PC-9 (cell line): ENCODE measurements at regions of chr11 and their contacts with region 1.

Region 1: DNA sequence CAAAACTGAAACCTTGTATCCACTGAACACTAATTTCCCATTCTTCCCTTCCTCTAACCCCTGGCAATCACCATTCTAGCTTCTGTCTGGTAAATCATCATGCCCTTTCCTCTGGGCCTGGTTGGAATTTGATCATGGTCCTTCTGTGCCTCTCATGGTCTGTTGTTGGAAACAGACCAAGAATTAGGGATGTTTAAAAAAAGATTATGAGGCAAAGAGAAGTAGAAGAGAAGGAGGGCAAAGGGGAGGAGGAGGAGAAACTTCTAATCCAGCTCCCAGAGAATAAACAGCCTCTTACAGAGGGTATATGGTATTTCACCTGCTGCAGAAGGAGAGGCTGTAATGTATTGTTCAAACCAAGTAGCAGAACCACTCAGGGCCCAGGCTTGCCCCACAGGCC is 10.6 kb downstream of the BCO2 start:
- DNase-seq: peak in 1 of 2 experiments; percentile 26
- H3K4me3 ChIP-seq: no peak overlapping the region
- H3K27ac ChIP-seq: no peak overlapping the region
- H3K4me1 ChIP-seq: peaks cover 6% of the 10 kb centered on the region; the same call in 1 of the 2 replicates
- H3K27me3 ChIP-seq: no peaks in the 10 kb centered on the region
- CTCF ChIP-seq: no peak

Region 2: GRCh38 chr11:112129656-112130055 is 56.2 kb before region 1 on chr11:
- CTCF ChIA-PET with region 1: no interaction called
- POLR2A ChIA-PET with region 1: no interaction called
- intact Hi-C with region 1: no loop called
- DNase-seq: no peak
- H3K4me3 ChIP-seq: no peak overlapping the region
- H3K27ac ChIP-seq: no peak overlapping the region
- H3K4me1 ChIP-seq: peaks cover 24% of the 10 kb centered on the region
- H3K27me3 ChIP-seq: no peaks in the 10 kb centered on the region
- CTCF ChIP-seq: no peak

Region 3: DNA sequence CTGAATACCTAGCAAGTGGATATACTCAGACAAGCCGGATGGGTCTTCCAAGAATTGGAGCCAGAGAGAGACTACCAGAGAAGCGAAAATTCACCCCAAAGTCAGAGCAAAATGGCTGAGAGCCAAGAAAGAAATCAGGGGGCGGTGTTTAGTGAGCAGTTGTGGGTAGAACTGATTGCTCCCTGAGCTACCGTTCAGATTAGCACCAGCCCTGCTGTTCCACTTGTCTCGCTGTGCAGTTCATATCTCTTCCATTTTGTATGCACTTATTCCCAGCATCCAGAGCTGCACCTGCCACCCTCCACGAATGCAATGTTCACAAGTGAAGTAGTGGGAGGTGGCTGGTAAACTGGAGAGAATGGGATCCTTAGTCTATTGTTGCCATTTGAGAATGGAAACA is 1263.9 kb after region 1 on chr11:
- CTCF ChIA-PET with region 1: no interaction called
- POLR2A ChIA-PET with region 1: interaction called, 20 read pairs
- intact Hi-C with region 1: no loop called
- DNase-seq: no peak
- H3K4me3 ChIP-seq: no peak overlapping the region
- H3K27ac ChIP-seq: no peak overlapping the region
- H3K4me1 ChIP-seq: no peaks in the 10 kb centered on the region
- H3K27me3 ChIP-seq: peaks cover 87% of the 10 kb centered on the region
- CTCF ChIP-seq: no peak